ENCODE measurements at regions of chr11 and their contacts with region 1.

Region 1: DNA sequence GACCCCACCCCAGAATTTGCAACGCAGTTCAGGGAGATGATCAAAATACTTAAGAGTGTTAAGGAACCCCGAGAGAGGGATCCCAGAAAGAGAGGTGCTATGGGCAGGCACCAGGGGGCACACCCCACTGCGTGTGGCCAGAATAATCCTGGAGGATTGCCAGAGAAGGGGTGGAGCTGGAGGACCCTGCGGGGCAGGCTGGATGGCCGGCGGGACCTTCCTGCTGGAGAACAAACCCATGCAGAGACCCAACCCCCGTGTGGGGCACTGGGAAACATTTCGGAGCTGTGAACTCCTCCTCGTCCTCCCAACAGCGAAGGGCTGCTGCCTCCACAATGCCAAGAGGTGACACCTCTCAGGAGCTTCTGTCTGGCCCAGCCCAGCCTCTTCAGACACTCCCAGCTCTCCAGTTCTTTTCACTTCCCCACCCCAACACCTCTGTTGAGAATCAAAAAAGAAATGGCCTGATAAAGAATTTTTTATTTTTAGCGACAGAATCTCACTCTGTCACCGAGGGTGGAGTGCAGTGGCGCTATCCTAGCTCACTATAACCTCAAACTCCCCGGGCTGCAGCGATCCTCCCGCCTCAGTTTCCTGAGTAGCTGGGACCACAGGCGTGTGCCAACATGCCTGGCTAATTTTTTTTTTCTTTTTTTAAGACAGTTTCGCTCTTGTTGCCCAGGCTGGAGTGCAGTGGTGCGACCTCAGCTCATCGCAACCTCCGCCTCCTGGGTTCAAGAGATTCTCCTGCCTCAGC is 25.6 kb downstream of the RHOD start:
- DNase-seq: no peak
- H3K4me3 ChIP-seq: no peak overlapping the region
- H3K27ac ChIP-seq: no peak overlapping the region
- H3K4me1 ChIP-seq: peaks cover 19% of the 10 kb centered on the region
- H3K27me3 ChIP-seq: no peaks in the 10 kb centered on the region
- CTCF ChIP-seq: no peak

Region 2: DNA sequence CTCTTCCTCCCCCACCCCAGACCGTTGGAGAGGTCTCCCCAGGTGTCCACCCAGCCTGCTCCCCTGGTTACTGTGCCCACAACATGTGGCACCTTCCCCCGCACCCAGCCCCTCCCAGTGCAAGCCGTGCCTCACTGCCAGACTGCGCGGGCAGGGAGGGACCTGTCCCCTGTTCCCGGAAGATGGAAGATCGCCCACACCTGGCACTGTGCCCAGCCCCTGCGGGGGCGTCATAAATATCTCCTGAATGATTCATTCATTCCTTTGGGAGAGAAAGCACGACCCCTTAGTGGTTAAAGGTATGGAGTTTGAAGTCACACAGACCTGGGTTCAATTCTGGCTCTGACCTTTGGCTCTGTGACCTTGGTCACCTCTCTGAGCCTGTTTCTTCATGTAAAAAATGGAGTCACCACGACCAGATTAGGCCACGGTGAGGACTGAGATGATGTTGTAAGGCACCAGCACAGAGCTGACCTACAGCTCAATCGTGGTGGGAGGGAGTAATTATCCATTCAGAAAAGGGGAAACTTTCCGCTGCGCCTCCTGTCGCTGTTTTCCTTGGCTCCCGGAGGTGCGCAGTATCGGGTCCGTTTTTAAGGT is 59.8 kb before region 1 on chr11:
- CTCF ChIA-PET with region 1: no interaction called
- POLR2A ChIA-PET with region 1: no interaction called
- intact Hi-C with region 1: no loop called
- DNase-seq: peak; percentile 89
- H3K4me3 ChIP-seq: peak overlapping the region; percentile 54
- H3K27ac ChIP-seq: no peak overlapping the region
- H3K4me1 ChIP-seq: peaks cover 20% of the 10 kb centered on the region
- H3K27me3 ChIP-seq: no peaks in the 10 kb centered on the region
- CTCF ChIP-seq: no peak

Region 3: DNA sequence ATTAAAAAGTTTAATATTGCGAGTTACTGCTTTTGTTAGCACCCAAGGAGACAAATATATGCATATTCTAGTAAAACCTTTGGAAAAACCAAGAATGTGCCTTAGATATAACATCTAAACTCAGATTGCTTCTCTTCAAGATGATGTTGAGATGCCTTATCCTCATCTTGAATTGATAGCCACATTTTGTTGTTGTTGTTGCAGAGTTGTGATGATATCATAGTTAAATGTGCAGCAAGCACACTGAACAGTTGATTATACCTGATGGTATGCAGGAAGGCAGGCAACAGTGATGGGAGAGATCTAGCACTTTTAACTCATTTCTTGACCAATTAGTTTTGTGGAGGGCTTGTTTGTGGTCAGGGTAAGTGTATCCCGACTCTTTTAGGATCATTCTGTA is 84.9 kb after region 1 on chr11:
- CTCF ChIA-PET with region 1: interaction called, 9 read pairs
- POLR2A ChIA-PET with region 1: no interaction called
- intact Hi-C with region 1: loop called (anchors 5 kb)
- DNase-seq: no peak
- H3K4me3 ChIP-seq: no peak overlapping the region
- H3K27ac ChIP-seq: no peak overlapping the region
- H3K4me1 ChIP-seq: peaks cover 27% of the 10 kb centered on the region
- H3K27me3 ChIP-seq: no peaks in the 10 kb centered on the region
- CTCF ChIP-seq: no peak

Measured in A673 (cell line).